ENCODE measurements at regions of chr3 and their contacts with region 1.

Region 1: GRCh38 chr3:64484289-64484992 is 203.4 kb downstream of the ADAMTS9 start:
- DNase-seq: no peak
- H3K4me3 ChIP-seq: no peak overlapping the region
- CTCF ChIP-seq: peak; percentile 83

Region 2: GRCh38 chr3:64011685-64012084 is 472.8 kb before region 1 on chr3:
- CTCF ChIA-PET with region 1: interaction called, 30 read pairs
- POLR2A ChIA-PET with region 1: no interaction called
- DNase-seq: no peak
- H3K4me3 ChIP-seq: no peak overlapping the region
- CTCF ChIP-seq: no peak

Region 3: DNA sequence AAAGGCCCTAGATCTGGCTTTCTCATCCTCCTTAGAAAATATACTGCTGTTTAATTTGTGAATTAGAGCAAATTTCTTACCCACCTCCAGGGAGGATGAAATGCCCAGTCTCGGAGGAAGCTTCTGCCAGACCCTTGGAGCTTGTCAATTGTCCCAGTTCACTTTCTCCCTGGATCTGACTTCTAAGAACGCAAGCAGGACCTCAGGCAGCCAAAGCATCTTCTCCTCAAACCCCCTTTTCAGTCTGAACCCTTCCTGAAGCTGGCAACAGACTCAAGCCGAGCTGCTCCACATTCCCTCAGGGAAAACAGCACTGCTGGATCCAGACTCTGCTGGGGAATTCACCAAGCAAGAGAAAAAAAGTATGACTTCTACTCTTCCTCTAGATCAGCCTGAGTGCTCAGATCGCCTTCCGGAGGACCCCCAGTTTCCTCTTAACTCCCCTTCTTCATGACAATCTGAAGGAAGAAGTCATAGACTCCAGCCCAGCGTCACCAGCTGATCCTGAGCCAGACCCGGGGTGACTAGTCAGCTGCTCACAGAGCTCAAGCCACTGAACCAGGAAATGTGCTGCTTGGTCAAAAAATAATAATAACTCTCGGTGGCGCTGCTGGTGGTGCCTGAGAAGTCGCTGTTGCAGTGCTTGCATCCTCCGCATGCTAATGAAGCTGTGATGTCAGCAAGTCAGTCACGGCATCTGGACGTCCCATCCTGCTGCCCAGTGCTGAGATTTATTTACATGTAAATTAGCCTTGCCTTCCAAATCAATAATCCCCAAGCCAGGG is 259.4 kb before region 1 on chr3 and contains the start of gene PRICKLE2:
- CTCF ChIA-PET with region 1: interaction called, 25 read pairs
- POLR2A ChIA-PET with region 1: no interaction called
- DNase-seq: peak; percentile 69
- H3K4me3 ChIP-seq: peak within 1 kb of the TSS; percentile 52
- CTCF ChIP-seq: peak; percentile 22

Region 4: GRCh38 chr3:64238971-64239667 is 245.3 kb before region 1 on chr3:
- CTCF ChIA-PET with region 1: interaction called, 11 read pairs
- POLR2A ChIA-PET with region 1: no interaction called
- DNase-seq: peak; percentile 87
- H3K4me3 ChIP-seq: peak overlapping the region; percentile 34
- CTCF ChIP-seq: no peak

Region 5: DNA sequence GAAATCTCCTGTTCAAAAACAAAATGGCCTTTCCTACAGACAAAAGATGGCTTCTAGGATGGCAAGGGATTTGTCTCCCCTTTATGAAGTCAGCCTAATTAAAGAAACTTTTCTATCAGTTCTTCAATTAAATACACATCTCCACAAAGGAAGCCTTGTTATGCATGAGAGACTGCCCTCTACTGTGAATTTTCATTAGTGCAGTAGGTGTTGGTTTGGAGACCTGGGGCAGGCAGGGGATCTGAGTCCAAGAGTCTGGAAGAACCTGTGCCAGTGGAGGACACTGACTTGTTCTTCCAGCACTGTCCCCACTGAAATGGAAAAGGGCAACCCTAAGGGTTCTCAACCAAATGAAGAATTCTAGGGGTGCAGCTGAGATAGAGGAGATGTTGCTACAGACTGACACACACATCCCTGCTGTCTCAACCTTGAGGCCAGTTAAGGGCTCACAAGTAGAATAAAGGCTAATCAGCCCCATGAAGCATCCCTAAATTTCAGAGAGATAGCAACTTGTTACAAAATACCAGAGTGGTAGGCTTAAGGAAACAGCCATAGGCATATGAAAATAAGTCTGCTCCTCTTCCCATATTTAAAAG is 85.1 kb before region 1 on chr3:
- CTCF ChIA-PET with region 1: interaction called, 21 read pairs
- POLR2A ChIA-PET with region 1: no interaction called
- DNase-seq: no peak
- H3K4me3 ChIP-seq: no peak overlapping the region
- CTCF ChIP-seq: peak; percentile 68

Region 6: DNA sequence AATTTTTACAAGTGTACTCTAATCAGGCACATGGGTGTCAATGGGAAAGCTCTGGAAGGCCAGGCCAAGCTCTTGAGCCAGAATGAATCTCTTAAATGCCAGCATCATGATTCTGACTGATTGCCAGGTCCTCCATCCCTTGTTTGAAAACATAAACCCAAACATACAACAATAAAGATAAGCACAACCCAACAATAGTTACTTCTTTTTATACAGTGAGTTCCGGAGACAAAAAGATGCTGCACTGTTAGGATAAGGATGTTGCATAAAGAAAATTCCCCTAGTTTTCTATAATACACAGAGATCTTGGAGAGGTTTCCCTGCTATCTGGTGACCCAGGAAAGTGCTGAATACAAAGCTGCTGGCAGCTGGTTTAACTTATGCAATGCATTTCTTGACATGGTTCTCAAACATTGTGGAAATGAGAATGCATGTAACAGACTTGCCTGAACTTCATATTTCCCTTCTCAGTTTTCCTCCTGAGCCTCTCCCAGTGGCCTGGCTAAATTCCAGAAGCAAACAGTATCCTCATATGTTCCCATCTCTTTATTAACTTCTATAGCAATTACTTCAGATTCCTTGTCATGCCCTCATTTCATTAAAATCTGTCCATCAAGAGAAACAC is 79.1 kb before region 1 on chr3:
- CTCF ChIA-PET with region 1: interaction called, 21 read pairs
- POLR2A ChIA-PET with region 1: no interaction called
- DNase-seq: no peak
- H3K4me3 ChIP-seq: no peak overlapping the region
- CTCF ChIP-seq: no peak

Region 7: GRCh38 chr3:64462203-64462602 is 22.2 kb before region 1 on chr3:
- CTCF ChIA-PET with region 1: interaction called, 37 read pairs
- POLR2A ChIA-PET with region 1: no interaction called
- DNase-seq: peak; percentile 79
- H3K4me3 ChIP-seq: peak overlapping the region; percentile 28
- CTCF ChIP-seq: no peak

Measured in AG04449 (cell line).